ENCODE measurements at regions of chr13 and their contacts with region 1.

Region 1: GRCh38 chr13:52450012-52450792 is at the start of gene VPS36:
- DNase-seq: peak; percentile 97 to 99
- ATAC-seq: peak; percentile 72 to 92 (median 75)
- H3K4me3 ChIP-seq: peak within 1 kb of the TSS; percentile 63
- H3K4me3 Mint-ChIP-seq: peak within 1 kb of the TSS; percentile 97
- H3K27ac ChIP-seq: peak within 1 kb of the TSS; percentile 74
- H3K27ac Mint-ChIP-seq: peak within 1 kb of the TSS; percentile 87 to 93
- H3K4me1 ChIP-seq: peaks cover 20% of the 10 kb centered on the region
- H3K4me1 Mint-ChIP-seq: peaks cover 39 to 42% of the 10 kb centered on the region in 2 donors
- H3K27me3 ChIP-seq: no peaks in the 10 kb centered on the region
- H3K27me3 Mint-ChIP-seq: peaks cover 0 to 2% of the 10 kb centered on the region in 2 donors
- CTCF ChIP-seq: peak; percentile 99
- total RNA-seq, gene VPS36: 59.0 to 64.2 (median 63.3) TPM

Region 2: GRCh38 chr13:52001120-52001731 is 449.0 kb before region 1 on chr13:
- intact Hi-C with region 1: loop called (anchors 1 kb)
- DNase-seq: peak in 1 of 2 donors; percentile 64
- ATAC-seq: peak; percentile 65 to 92 (median 87)
- H3K4me3 ChIP-seq: no peak overlapping the region
- H3K4me3 Mint-ChIP-seq: no peak overlapping the region
- H3K27ac ChIP-seq: no peak overlapping the region
- H3K27ac Mint-ChIP-seq: no peak overlapping the region
- H3K4me1 ChIP-seq: no peaks in the 10 kb centered on the region
- H3K4me1 Mint-ChIP-seq: no peaks in the 10 kb centered on the region
- H3K27me3 ChIP-seq: no peaks in the 10 kb centered on the region
- H3K27me3 Mint-ChIP-seq: peaks cover 16 to 44% of the 10 kb centered on the region in 2 donors
- CTCF ChIP-seq: peak; percentile 72

Region 3: GRCh38 chr13:52011632-52012511 is 438.3 kb before region 1 on chr13 and contains the start of gene ALG11:
- intact Hi-C with region 1: loop called (anchors 2 kb)
- DNase-seq: peak; percentile 99
- ATAC-seq: peak; percentile 98 to 100 (median 98)
- H3K4me3 ChIP-seq: peak within 1 kb of the TSS; percentile 88
- H3K4me3 Mint-ChIP-seq: peak within 1 kb of the TSS; percentile 99
- H3K27ac ChIP-seq: peak within 1 kb of the TSS; percentile 64
- H3K27ac Mint-ChIP-seq: peak within 1 kb of the TSS; percentile 93 to 96
- H3K4me1 ChIP-seq: peaks cover 9% of the 10 kb centered on the region
- H3K4me1 Mint-ChIP-seq: peaks cover 21 to 32% of the 10 kb centered on the region in 2 donors
- H3K27me3 ChIP-seq: peaks cover 8% of the 10 kb centered on the region
- H3K27me3 Mint-ChIP-seq: peaks cover 24 to 27% of the 10 kb centered on the region in 2 donors
- CTCF ChIP-seq: no peak
- total RNA-seq, gene ALG11: 30.8 to 35.8 (median 35.2) TPM

Region 4: DNA sequence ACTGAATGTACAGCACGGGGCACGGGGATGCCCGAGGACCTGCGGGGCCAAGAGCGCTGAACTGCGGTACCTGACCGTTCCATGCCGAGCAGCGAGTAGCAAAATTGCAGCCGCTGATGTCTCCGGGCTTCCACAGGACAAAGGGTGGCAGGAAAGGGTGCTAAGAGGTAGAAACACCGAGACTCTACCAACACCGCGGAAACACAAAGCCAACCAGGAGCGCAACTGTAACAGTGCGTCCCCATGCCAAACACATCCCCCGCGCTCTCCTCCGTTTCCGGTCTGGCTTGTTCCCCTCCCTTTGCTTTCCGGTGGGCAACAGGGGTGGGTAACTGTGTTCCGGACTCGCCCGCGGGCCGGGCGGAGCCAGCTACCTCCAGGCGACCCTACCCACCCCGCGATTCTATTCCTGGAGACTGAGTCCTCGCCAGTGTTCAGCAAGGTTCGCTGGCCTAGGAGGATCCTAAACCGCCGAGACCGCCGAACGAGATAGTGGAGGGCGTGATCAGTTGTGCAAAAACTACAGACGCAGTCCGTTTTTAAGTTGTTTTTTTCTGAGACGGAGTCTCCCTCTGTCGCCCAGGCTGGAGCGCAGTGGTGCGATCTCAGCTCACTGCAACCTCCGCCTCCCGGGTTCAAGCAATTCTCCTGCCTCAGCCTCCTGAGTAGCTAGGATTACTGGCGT is 255.9 kb before region 1 on chr13:
- intact Hi-C with region 1: loop called (anchors 1 kb)
- DNase-seq: peak; percentile 83 to 92
- ATAC-seq: peak; percentile 87 to 95 (median 89)
- H3K4me3 ChIP-seq: peak overlapping the region; percentile 74
- H3K4me3 Mint-ChIP-seq: peak overlapping the region; percentile 98
- H3K27ac ChIP-seq: peak overlapping the region; percentile 65
- H3K27ac Mint-ChIP-seq: peak overlapping the region; percentile 89 to 91
- H3K4me1 ChIP-seq: peaks cover 7% of the 10 kb centered on the region
- H3K4me1 Mint-ChIP-seq: peaks cover 19 to 23% of the 10 kb centered on the region in 2 donors
- H3K27me3 ChIP-seq: no peaks in the 10 kb centered on the region
- H3K27me3 Mint-ChIP-seq: no peaks in the 10 kb centered on the region
- CTCF ChIP-seq: no peak

Region 5: DNA sequence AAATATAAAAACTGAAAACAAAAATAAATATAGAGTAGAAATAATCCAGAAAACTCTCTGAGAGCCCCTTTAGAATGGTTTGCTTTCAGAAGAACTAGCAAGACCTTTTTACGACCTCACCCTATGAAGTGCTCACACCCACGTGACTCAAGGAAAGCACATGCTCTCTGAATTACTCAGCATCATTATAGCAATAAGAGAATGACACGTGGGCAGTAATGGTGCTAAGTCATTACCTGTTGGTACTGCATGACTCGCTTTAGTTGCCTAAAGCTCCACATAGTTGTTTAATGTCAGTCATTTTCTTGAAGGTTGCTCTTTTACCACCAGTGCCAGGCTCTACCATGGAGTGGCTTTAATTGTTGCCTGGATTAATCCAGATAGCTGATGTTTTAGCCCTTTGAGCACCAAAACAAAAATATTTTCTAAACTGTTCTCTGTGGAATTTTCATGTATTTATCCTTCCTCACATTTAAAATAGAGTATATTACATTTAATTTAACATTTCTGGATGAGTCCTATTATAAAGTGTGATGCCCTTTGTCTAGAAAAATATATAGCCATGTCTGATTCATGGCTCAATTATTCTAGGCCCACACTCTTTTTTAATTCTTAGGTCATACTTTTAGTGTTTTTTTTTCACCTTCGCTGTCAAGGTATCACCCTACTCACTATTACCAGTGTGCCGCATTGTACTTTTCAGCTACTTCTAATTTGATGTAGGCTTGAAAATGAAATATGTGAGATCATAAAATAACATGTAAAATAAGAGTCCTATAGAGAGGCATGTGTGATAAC is 101.0 kb before region 1 on chr13:
- intact Hi-C with region 1: no loop called
- DNase-seq: no peak
- ATAC-seq: no peak
- H3K4me3 ChIP-seq: no peak overlapping the region
- H3K4me3 Mint-ChIP-seq: no peak overlapping the region
- H3K27ac ChIP-seq: no peak overlapping the region
- H3K27ac Mint-ChIP-seq: no peak overlapping the region
- H3K4me1 ChIP-seq: no peaks in the 10 kb centered on the region
- H3K4me1 Mint-ChIP-seq: no peaks in the 10 kb centered on the region
- H3K27me3 ChIP-seq: no peaks in the 10 kb centered on the region
- H3K27me3 Mint-ChIP-seq: peaks cover 15 to 25% of the 10 kb centered on the region in 2 donors
- CTCF ChIP-seq: no peak

Region 6: GRCh38 chr13:52652196-52652979 is 202.2 kb after region 1 on chr13 and contains the start of gene SUGT1:
- intact Hi-C with region 1: loop called (anchors 5 kb)
- DNase-seq: peak; percentile 82 to 98
- ATAC-seq: peak; percentile 87 to 97 (median 91)
- H3K4me3 ChIP-seq: peak within 1 kb of the TSS; percentile 57
- H3K4me3 Mint-ChIP-seq: no peak within 1 kb of the TSS
- H3K27ac ChIP-seq: peak within 1 kb of the TSS; percentile 88
- H3K27ac Mint-ChIP-seq: no peak within 1 kb of the TSS
- H3K4me1 ChIP-seq: peaks cover 5% of the 10 kb centered on the region
- H3K4me1 Mint-ChIP-seq: peaks cover 8 to 14% of the 10 kb centered on the region in 2 donors
- H3K27me3 ChIP-seq: no peaks in the 10 kb centered on the region
- H3K27me3 Mint-ChIP-seq: no peaks in the 10 kb centered on the region
- CTCF ChIP-seq: peak; percentile 57
- total RNA-seq, gene SUGT1: 27.4 to 34.4 (median 29.7) TPM

Measured in natural killer cell (primary cell).